Activated T-helper 2 cell treated with anti-CD3 and anti-CD28 coated beads, Interferon-gamma antibody, Interleukin-2, Interleukin-4, amounts not matched to agents 10 μg/mL and 5 μg/mL and 100 μg/mL, durations not matched to agents 14 hours and 24 hours and 36 hours (primary cell): ENCODE measurements at regions of chr12 and their contacts with region 1.

Region 1: DNA sequence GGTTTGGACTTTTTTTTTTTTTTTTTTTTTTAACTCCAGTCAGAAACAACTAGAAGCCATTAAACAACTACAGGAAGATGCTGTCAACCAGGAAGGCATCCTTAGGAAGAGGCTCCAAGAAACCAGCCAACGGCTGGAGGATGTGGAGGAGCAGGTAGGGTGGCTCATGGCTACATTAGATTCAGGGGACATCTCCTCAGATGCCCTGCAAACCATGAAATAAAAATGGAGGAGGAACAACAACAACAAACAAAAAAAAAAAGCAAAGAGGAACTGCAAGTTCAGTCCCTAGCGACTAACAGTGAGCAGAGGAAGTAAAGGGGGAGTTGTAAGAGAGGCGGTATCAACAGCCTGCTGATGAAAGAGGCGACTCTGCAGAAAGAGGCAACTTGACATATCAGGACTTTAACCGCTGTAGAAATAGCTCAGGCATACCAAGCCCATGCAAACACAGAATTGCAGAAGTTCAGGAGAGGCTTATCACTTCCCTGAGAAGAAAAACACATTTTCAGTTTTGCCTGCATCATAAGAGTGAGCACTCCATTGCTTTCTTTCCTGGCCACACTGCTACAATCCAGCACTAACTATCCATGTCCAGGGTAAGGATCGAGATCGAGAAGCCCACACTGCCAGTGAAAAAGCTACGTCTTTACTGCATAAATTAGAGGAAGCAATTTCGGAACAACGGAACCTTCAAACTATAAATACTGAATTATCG is 103.5 kb upstream of the BCAT1 start:
- DNase-seq: peak; percentile 61
- H3K4me3 Mint-ChIP-seq: peak overlapping the region; percentile 85
- H3K27ac Mint-ChIP-seq: peak overlapping the region; percentile 100
- H3K4me1 Mint-ChIP-seq: peaks cover 45% of the 10 kb centered on the region
- H3K27me3 Mint-ChIP-seq: peaks cover 3% of the 10 kb centered on the region

Region 2: GRCh38 chr12:24705741-24706358 is 346.5 kb before region 1 on chr12:
- intact Hi-C with region 1: loop called (anchors 5 kb)
- DNase-seq: no peak
- H3K4me3 Mint-ChIP-seq: no peak overlapping the region
- H3K27ac Mint-ChIP-seq: no peak overlapping the region
- H3K4me1 Mint-ChIP-seq: peaks cover 13% of the 10 kb centered on the region
- H3K27me3 Mint-ChIP-seq: no peaks in the 10 kb centered on the region

Region 3: DNA sequence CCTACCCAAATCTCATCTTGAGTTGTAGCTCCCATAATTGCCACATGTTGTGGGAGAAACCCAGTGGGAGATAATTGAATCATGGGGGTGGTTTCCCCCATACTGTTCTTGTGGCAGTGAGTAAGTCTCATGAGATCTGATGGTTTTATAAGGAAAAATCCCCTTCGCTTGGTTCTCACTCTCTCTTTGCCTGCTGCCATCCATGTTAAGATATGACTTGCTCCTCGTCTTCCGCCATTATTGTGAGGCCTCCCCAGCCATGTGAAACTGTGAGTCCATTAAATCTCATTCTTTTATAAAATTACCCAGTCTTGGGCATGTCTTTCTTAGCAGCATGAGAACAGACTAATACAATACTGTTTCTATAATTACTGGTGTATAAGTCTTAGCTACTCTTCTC is 97.0 kb before region 1 on chr12:
- intact Hi-C with region 1: loop called (anchors 2 kb)
- DNase-seq: no peak
- H3K4me3 Mint-ChIP-seq: no peak overlapping the region
- H3K27ac Mint-ChIP-seq: no peak overlapping the region
- H3K4me1 Mint-ChIP-seq: peaks cover 21% of the 10 kb centered on the region
- H3K27me3 Mint-ChIP-seq: peaks cover 29% of the 10 kb centered on the region

Region 4: DNA sequence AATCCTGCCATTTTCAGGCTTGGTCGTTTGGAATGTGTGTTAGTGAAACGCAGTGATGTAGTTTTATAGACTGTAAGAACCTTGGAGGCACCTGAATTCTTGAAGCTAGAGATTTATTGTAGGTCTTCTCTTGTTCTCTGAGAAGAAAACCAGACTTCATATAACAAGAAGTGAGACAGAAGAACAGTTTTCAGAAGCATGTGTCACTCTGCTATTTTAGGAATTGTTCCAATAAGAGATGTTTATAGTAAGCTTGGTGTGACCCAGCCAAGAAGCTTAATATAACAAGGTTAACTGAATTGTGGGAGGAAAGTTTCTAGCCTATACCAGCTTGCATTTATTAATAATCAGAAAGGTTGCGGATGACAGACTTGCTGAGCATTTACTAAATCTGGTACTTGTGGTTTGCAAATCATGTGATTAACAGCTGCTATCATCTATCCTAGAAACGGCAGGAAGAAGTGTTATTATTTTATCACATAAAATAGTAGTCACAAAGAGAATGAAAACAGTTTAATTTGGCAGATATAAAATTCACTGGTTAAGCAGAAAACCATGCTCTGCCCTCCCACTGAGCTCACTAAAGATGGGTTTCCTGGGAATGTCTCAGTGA is 54.3 kb before region 1 on chr12:
- intact Hi-C with region 1: no loop called
- DNase-seq: no peak
- H3K4me3 Mint-ChIP-seq: no peak overlapping the region
- H3K27ac Mint-ChIP-seq: no peak overlapping the region
- H3K4me1 Mint-ChIP-seq: peaks cover 7% of the 10 kb centered on the region
- H3K27me3 Mint-ChIP-seq: peaks cover 20% of the 10 kb centered on the region

Region 5: GRCh38 chr12:25020621-25021243 is 31.6 kb before region 1 on chr12:
- intact Hi-C with region 1: loop called (anchors 5 kb)
- DNase-seq: no peak
- H3K4me3 Mint-ChIP-seq: no peak overlapping the region
- H3K27ac Mint-ChIP-seq: no peak overlapping the region
- H3K4me1 Mint-ChIP-seq: no peaks in the 10 kb centered on the region
- H3K27me3 Mint-ChIP-seq: peaks cover 16% of the 10 kb centered on the region

Region 6: DNA sequence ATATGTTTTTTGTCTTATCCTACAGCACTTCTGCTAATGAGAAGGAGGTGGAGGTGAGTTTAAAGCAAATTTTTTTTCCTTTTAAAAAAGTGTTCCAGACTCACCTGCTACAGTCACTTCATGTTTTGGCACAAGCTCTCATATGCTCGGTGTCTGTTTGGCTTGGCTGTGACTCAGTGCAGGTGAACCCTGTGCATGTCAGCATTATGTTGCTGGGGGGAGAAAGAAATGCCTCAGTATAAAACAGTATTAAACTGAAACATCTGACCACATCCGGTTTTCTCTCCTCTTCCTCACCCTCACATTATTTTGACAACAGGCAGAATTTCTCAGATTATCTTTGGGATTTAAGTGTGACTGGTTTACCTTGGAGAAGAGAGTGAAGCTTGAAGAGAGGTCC is 37.4 kb after region 1 on chr12:
- intact Hi-C with region 1: loop called (anchors 5 kb)
- DNase-seq: no peak
- H3K4me3 Mint-ChIP-seq: no peak overlapping the region
- H3K27ac Mint-ChIP-seq: no peak overlapping the region
- H3K4me1 Mint-ChIP-seq: peaks cover 13% of the 10 kb centered on the region
- H3K27me3 Mint-ChIP-seq: no peaks in the 10 kb centered on the region

Region 7: GRCh38 chr12:25135531-25136154 is 83.3 kb after region 1 on chr12:
- intact Hi-C with region 1: no loop called
- DNase-seq: no peak
- H3K4me3 Mint-ChIP-seq: no peak overlapping the region
- H3K27ac Mint-ChIP-seq: no peak overlapping the region
- H3K4me1 Mint-ChIP-seq: no peaks in the 10 kb centered on the region
- H3K27me3 Mint-ChIP-seq: peaks cover 24% of the 10 kb centered on the region

Region 8: GRCh38 chr12:25195056-25195971 is 143.0 kb after region 1 on chr12 and contains the starts of genes DNAI7 and ETFRF1:
- intact Hi-C with region 1: loop called (anchors 2 kb)
- DNase-seq: peak; percentile 92
- H3K4me3 Mint-ChIP-seq: peak within 1 kb of the TSS; percentile 94
- H3K27ac Mint-ChIP-seq: peak within 1 kb of the TSS; percentile 94
- H3K4me1 Mint-ChIP-seq: peaks cover 22% of the 10 kb centered on the region
- H3K27me3 Mint-ChIP-seq: peaks cover 3% of the 10 kb centered on the region
- total RNA-seq, gene DNAI7: not detected in 2 replicates
- total RNA-seq, gene ETFRF1: 7.6 and 9.8 TPM in 2 replicates

Region 9: DNA sequence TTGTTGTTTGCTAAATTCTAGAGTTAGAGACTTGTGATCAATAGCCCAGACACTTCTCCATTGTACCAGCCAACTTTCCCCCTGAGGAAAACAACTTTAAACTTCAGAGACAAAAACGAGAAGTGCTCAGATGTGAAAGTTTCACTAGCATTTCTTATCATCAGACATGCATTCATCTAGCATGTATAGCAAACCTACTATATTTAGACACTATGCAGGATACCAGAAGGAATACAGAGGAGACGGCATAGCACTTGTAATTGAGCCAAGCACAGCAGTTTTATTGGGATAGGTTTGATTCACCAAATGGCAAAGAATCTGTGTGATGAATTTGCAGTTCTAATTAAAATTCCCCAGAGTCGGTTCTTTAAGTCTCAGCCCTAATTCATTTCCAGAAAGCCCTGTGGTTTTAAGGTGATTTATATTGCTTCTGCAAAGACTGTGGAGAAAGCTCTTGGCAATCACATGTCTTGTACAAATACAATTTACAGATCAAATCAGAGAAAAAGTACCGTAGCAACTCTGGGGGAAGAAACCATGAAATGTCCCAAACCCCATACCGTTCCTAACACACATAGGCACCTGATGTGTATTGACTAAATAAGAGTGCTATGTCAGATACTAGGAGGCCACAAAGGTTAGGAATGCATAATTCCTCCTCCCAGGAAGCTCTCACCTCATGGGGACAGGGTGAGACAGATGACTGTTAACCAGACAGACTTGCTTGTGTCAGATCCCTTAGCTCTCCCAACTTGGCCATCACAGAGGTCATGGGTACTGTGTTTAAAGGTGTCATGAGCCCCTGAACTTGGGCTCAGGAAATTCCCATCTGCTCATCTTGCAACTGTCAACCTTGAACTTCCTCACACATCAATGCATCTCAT is 268.0 kb after region 1 on chr12:
- intact Hi-C with region 1: loop called (anchors 5 kb)
- DNase-seq: no peak
- H3K4me3 Mint-ChIP-seq: no peak overlapping the region
- H3K27ac Mint-ChIP-seq: peak overlapping the region; percentile 56
- H3K4me1 Mint-ChIP-seq: peaks cover 46% of the 10 kb centered on the region
- H3K27me3 Mint-ChIP-seq: peaks cover 17% of the 10 kb centered on the region